ENCODE measurements at regions of chr1 and their contacts with region 1.

Region 1: GRCh38 chr1:201696217-201696761 is 132.7 kb upstream of the IPO9 start:
- DNase-seq: peak; percentile 81 to 94 (median 91)
- ATAC-seq: peak; percentile 65 to 88 (median 84)
- H3K4me3 ChIP-seq: peak overlapping the region in 1 of 12 donors; percentile 14
- H3K27ac ChIP-seq: peak overlapping the region in 11 of 12 donors; percentile 40 to 72 (median 60)
- H3K4me1 ChIP-seq: peaks cover 4 to 72% (median 57%) of the 10 kb centered on the region in 12 donors
- H3K27me3 ChIP-seq: no peaks in the 10 kb centered on the region
- CTCF ChIP-seq: peak in 1 of 12 donors; percentile 33
- POLR2A ChIP-seq: no peak

Region 2: DNA sequence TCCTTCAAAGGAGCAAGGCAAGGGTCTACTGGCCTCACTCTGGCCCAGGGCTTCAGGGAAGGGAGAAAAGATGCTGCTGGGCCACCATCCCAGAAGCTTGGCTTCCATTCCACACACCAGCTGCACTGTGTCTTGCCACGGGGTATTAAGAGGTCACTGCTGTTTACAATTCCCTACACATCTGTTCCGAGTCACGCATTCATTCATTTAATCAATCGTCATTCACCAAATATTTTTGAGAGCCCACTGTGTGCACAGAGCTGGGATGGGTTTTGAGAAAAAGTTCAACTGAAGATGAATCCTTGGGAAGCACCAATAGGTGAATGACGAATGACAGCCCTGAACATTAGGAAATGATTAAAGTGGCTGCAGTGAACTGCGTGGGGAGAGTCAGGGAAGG is 55.7 kb before region 1 on chr1:
- intact Hi-C with region 1: loop called in 3 of 10 experiments (anchors 5 to 10 kb)
- DNase-seq: peak in 4 of 5 donors; percentile 65 to 75 (median 69)
- ATAC-seq: peak; percentile 47 to 76 (median 65)
- H3K4me3 ChIP-seq: no peak overlapping the region
- H3K27ac ChIP-seq: peak overlapping the region in 10 of 12 donors; percentile 12 to 67 (median 62)
- H3K4me1 ChIP-seq: peaks cover 0 to 65% (median 49%) of the 10 kb centered on the region in 12 donors
- H3K27me3 ChIP-seq: no peaks in the 10 kb centered on the region
- CTCF ChIP-seq: no peak
- POLR2A ChIP-seq: no peak

Region 3: DNA sequence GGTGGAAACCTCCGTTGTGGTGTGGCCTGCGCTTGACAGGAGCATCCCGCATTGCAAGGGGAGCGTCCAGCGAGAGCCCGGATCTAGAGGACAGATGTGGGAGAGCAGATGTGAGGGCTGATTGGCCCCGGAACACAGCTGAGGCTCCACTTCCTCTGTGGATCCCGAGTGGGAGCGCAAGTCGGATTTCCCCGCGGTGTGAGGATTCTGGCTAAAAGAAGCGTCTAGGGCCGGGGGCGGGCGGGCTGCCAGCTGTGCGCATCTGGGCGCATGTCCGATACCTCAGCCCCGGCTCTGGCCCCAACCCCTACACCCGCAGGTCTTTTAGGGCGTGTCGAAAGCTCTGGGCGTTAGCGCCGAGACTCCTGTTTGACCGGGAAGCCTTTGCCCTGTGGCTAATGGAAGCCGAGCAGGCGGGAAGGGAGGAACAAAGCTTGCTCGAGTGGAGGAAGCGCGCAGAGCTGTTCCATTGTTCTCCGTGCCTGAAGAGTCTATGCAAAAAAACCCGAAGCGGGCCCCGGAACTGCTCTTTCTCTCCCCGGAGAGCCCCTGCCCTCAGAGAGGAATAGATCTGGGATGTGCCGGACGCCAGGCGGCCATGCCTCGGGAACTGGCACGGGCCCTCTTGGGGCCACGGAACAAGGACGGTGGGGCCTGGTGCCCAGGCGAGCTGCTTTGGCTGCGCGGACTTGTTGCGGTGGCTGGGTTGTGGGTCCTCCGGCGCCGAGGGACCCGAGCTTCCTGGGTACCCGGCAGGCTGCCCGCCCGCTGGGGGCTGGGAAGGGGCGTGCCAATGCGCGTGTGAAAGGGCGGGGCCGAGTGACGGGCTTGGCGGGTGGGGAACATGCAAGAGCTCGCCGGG is 46.3 kb before region 1 on chr1:
- intact Hi-C with region 1: loop called in 9 of 10 experiments (anchors 2 to 10 kb)
- DNase-seq: peak; percentile 82 to 93 (median 87)
- ATAC-seq: peak; percentile 47 to 74 (median 70)
- H3K4me3 ChIP-seq: peak overlapping the region; percentile 36 to 93 (median 68)
- H3K27ac ChIP-seq: peak overlapping the region; percentile 18 to 94 (median 80)
- H3K4me1 ChIP-seq: peaks cover 4 to 86% (median 63%) of the 10 kb centered on the region in 12 donors
- H3K27me3 ChIP-seq: no peaks in the 10 kb centered on the region
- CTCF ChIP-seq: peak in 1 of 12 donors; percentile 17
- POLR2A ChIP-seq: peak in 1 of 2 donors; percentile 18

Region 4: GRCh38 chr1:201676197-201676596 is 20.1 kb before region 1 on chr1:
- intact Hi-C with region 1: no loop called
- DNase-seq: peak in 3 of 5 donors; percentile 29 to 67 (median 38)
- ATAC-seq: peak; percentile 21 to 62 (median 54)
- H3K4me3 ChIP-seq: no peak overlapping the region
- H3K27ac ChIP-seq: peak overlapping the region in 7 of 12 donors; percentile 8 to 60 (median 20)
- H3K4me1 ChIP-seq: peaks cover 6 to 67% (median 49%) of the 10 kb centered on the region in 12 donors
- H3K27me3 ChIP-seq: no peaks in the 10 kb centered on the region
- CTCF ChIP-seq: no peak
- POLR2A ChIP-seq: no peak

Measured in heart left ventricle (tissue), 16 donors.